ENCODE measurements at regions of chr7 and their contacts with region 1.

Region 1: GRCh38 chr7:31373337-31374289 is 33.1 kb upstream of the NEUROD6 start:
- H3K4me3 ChIP-seq: no peak overlapping the region
- H3K27ac ChIP-seq: no peak overlapping the region
- H3K4me1 ChIP-seq: no peaks in the 10 kb centered on the region
- CTCF ChIP-seq: no peak

Region 2: DNA sequence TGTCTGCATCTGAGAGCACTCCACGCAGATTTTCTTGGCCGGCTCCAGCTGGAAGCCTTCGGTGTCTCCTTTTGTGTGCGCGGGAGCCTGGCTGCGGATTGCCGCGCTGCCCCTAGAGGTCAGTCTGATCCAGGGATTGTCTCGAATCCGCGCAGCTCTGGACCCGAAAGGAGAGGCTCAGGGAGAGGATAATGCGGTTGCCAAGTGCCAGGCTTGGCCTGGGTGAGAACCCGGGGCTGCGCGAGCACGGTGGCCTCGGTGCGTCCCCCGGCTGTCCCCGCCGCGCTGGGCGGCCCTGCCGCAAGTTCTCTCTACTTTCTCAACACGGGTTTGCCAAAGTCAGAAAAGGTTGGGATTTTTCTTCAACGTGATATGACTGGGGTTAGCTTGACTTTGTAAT is 180.6 kb before region 1 on chr7:
- CTCF ChIA-PET with region 1: interaction called, 11 read pairs
- POLR2A ChIA-PET with region 1: no interaction called
- H3K4me3 ChIP-seq: no peak overlapping the region
- H3K27ac ChIP-seq: no peak overlapping the region
- H3K4me1 ChIP-seq: no peaks in the 10 kb centered on the region
- CTCF ChIP-seq: peak; percentile 70

Region 3: DNA sequence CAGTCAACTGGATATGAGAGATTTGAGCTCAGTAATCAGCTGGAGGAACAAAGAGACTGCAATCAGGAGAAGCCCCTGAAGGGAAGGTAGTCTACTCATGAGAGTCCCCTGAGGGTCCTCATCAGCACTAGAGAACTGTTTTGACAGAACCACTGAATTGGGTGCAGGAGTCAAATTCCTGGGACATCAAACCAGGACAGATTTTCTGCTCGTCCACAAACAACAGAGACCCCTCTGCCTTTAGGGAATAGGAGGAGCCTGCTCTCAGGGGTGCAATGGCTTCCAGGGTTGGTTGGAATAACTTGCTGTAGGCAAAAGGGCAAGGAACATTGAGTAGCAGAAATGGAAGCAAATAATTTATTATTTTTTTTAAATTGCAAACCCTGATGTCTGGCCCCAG is 11.2 kb before region 1 on chr7:
- CTCF ChIA-PET with region 1: interaction called, 11 read pairs
- POLR2A ChIA-PET with region 1: no interaction called
- H3K4me3 ChIP-seq: no peak overlapping the region
- H3K27ac ChIP-seq: no peak overlapping the region
- H3K4me1 ChIP-seq: peaks cover 5% of the 10 kb centered on the region
- CTCF ChIP-seq: no peak

Region 4: DNA sequence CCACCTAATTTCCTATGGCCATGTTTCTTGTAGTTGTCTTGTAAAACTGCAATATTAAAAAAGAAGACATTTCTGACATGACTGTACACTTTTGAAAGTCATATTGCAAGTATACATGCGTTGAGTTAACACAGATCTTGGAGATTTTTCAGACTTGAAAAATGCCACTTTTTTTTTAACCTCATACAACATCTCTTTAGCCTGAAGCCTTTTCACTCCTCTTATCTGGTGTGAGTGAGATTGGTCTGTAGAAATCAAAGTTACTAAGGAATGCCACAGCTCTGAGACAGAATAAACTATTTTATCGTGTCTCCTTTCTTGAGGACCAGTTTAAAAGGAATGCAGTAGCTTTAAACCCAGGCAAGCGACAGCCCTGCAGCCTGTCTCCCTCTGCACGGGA is 10.9 kb after region 1 on chr7:
- CTCF ChIA-PET with region 1: interaction called, 10 read pairs
- POLR2A ChIA-PET with region 1: no interaction called
- H3K4me3 ChIP-seq: no peak overlapping the region
- H3K27ac ChIP-seq: no peak overlapping the region
- H3K4me1 ChIP-seq: no peaks in the 10 kb centered on the region
- CTCF ChIP-seq: no peak

Region 5: GRCh38 chr7:31633894-31634494 is 260.4 kb after region 1 on chr7:
- CTCF ChIA-PET with region 1: interaction called, 37 read pairs
- POLR2A ChIA-PET with region 1: no interaction called
- H3K4me3 ChIP-seq: no peak overlapping the region
- H3K27ac ChIP-seq: no peak overlapping the region
- H3K4me1 ChIP-seq: no peaks in the 10 kb centered on the region
- CTCF ChIP-seq: no peak